Caco-2 (cell line): ENCODE measurements at regions of chr2 and their contacts with region 1.

Region 1: GRCh38 chr2:68185541-68186164 is 28.0 kb downstream of the PNO1 start:
- DNase-seq: peak; percentile 58 to 73
- H3K4me3 ChIP-seq: no peak overlapping the region
- H3K4me3 Mint-ChIP-seq: no peak overlapping the region
- H3K27ac Mint-ChIP-seq: no peak overlapping the region
- H3K4me1 ChIP-seq: no peaks in the 10 kb centered on the region
- H3K4me1 Mint-ChIP-seq: no peaks in the 10 kb centered on the region
- H3K27me3 ChIP-seq: no peaks in the 10 kb centered on the region
- H3K27me3 Mint-ChIP-seq: no peaks in the 10 kb centered on the region
- CTCF ChIP-seq: peak; percentile 73 to 84

Region 2: GRCh38 chr2:68121873-68122679 is 63.6 kb before region 1 on chr2:
- CTCF ChIA-PET with region 1: interaction called, 3 read pairs
- POLR2A ChIA-PET with region 1: no interaction called
- intact Hi-C with region 1: loop called (anchors 2 kb)
- DNase-seq: peak; percentile 87 to 89
- H3K4me3 ChIP-seq: no peak overlapping the region
- H3K4me3 Mint-ChIP-seq: peak overlapping the region; percentile 34
- H3K27ac Mint-ChIP-seq: no peak overlapping the region
- H3K4me1 ChIP-seq: peaks cover 12% of the 10 kb centered on the region
- H3K4me1 Mint-ChIP-seq: peaks cover 10% of the 10 kb centered on the region
- H3K27me3 ChIP-seq: no peaks in the 10 kb centered on the region
- H3K27me3 Mint-ChIP-seq: no peaks in the 10 kb centered on the region
- CTCF ChIP-seq: peak; percentile 96